ENCODE measurements at regions of chr10 and their contacts with region 1.

Region 1: GRCh38 chr10:323651-324293 is 188.5 kb downstream of the ZMYND11 start:
- DNase-seq: peak; percentile 80
- ATAC-seq: peak; percentile 99
- H3K4me3 ChIP-seq: no peak overlapping the region
- H3K27ac ChIP-seq: peak overlapping the region; percentile 77
- H3K4me1 ChIP-seq: peaks cover 10% of the 10 kb centered on the region
- H3K27me3 ChIP-seq: no peaks in the 10 kb centered on the region
- CTCF ChIP-seq: no peak

Region 2: GRCh38 chr10:297567-297966 is 26.2 kb before region 1 on chr10:
- CTCF ChIA-PET with region 1: no interaction called
- POLR2A ChIA-PET with region 1: no interaction called
- intact Hi-C with region 1: loop called (anchors 1 kb)
- DNase-seq: no peak
- ATAC-seq: peak; percentile 58
- H3K4me3 ChIP-seq: peak overlapping the region; percentile 27; the same call in 1 of the 2 replicates
- H3K27ac ChIP-seq: peak overlapping the region; percentile 63
- H3K4me1 ChIP-seq: peaks cover 8% of the 10 kb centered on the region
- H3K27me3 ChIP-seq: no peaks in the 10 kb centered on the region
- CTCF ChIP-seq: no peak

Region 3: GRCh38 chr10:484441-484924 is 160.7 kb after region 1 on chr10:
- CTCF ChIA-PET with region 1: no interaction called
- POLR2A ChIA-PET with region 1: no interaction called
- intact Hi-C with region 1: no loop called
- DNase-seq: peak; percentile 36
- ATAC-seq: peak; percentile 82
- H3K4me3 ChIP-seq: peak overlapping the region; percentile 77
- H3K27ac ChIP-seq: no peak overlapping the region
- H3K4me1 ChIP-seq: no peaks in the 10 kb centered on the region
- H3K27me3 ChIP-seq: no peaks in the 10 kb centered on the region
- CTCF ChIP-seq: no peak

Region 4: DNA sequence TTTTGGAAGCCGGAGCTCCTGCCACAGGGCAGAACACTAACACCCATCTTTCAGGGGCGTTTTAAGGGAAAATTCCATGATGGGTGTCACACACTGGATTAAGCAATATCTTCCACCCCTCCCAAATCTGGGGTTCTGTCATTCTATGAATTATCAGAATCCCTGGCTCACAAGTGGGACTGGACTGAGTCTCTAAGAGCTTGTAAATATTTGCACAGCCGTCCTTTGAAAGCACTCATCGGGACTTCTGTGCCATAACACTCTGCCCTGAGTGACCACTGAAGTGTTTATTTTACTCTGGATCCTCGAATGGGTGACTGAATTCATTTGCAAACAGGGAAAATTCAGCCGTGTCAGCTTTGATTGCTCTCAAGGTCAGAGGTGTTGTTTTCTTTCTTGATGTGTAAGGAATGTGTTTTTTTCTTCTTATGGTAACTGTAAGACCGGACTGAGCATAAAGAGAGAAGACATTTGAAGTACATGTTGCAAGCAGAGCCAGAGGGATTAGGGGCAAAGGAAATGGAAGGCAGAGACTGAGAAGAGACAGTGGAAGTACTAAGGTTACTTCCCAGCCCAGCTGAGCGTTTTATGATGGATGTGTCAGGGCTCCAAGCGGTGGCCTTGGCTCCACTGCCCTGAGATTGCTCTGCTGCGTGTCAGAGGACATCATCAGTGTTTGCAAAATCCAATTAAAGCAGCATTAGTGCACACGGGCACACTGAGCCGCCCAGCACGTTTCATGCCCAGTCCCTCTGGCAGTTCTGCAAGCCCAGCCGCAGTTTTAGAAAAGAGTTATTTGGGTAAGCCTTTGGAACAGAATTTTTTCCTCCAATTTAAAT is 646.8 kb after region 1 on chr10:
- CTCF ChIA-PET with region 1: no interaction called
- POLR2A ChIA-PET with region 1: no interaction called
- intact Hi-C with region 1: no loop called
- DNase-seq: peak; percentile 27
- ATAC-seq: peak; percentile 84
- H3K4me3 ChIP-seq: no peak overlapping the region
- H3K27ac ChIP-seq: no peak overlapping the region
- H3K4me1 ChIP-seq: 0 out of 2 replicates have a peak, but pooled peaks cover 10% of the 10 kb centered on the region
- H3K27me3 ChIP-seq: no peaks in the 10 kb centered on the region
- CTCF ChIP-seq: no peak

Measured in PC-3 (cell line).